Panc1 (cell line): ENCODE measurements at regions of chr16 and their contacts with region 1.

Region 1: GRCh38 chr16:23310217-23310616 is 8.1 kb downstream of the SCNN1B start:
- DNase-seq: no peak
- ATAC-seq: no peak; the same call in 1 of the 2 replicates
- H3K4me3 ChIP-seq: no peak overlapping the region
- H3K27ac ChIP-seq: peak overlapping the region; percentile 52; the same call in 1 of the 2 replicates
- H3K4me1 ChIP-seq: peaks cover 33% of the 10 kb centered on the region
- H3K27me3 ChIP-seq: no peaks in the 10 kb centered on the region
- CTCF ChIP-seq: no peak

Region 2: GRCh38 chr16:23254338-23254737 is 55.9 kb before region 1 on chr16:
- CTCF ChIA-PET with region 1: no interaction called
- POLR2A ChIA-PET with region 1: no interaction called
- in situ Hi-C with region 1: no loop called
- intact Hi-C with region 1: no loop called
- DNase-seq: no peak
- ATAC-seq: peak; percentile 93
- H3K4me3 ChIP-seq: no peak overlapping the region
- H3K27ac ChIP-seq: no peak overlapping the region; the same call in 1 of the 2 replicates
- H3K4me1 ChIP-seq: peaks cover 5% of the 10 kb centered on the region
- H3K27me3 ChIP-seq: no peaks in the 10 kb centered on the region
- CTCF ChIP-seq: no peak

Region 3: DNA sequence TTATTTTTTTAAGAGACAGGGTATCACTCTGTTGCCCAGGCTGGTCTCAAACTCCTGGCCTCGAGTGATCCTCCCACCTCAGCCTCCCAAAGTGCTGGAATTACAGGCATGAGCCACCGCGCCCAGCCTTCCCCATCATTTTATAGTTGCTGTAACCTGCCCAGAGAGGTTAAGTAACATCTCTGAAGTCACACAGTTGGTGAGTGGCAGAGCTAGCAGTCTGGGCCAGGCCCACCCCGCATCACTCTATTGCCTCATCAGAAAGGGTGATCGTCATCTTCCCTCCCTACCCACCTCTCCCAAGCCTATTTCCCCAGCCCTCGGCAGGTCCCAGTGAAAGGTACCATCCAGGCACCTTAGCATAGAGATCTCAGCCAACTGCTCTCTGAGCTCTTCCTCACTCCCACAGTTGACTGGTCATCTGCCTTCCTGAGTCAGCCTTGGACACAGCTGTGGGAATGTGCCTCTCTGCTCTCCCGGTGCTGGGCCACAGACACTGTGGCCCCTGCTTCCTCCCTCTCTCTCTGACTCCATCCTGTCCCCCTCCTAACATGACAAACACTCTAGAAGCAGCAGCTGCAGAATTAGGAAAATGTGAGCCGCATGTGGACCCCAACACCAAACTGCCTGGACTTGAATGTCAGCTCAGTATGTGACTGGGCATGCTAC is 49.0 kb after region 1 on chr16:
- CTCF ChIA-PET with region 1: interaction called, 4 read pairs
- POLR2A ChIA-PET with region 1: interaction called, 11 read pairs
- in situ Hi-C with region 1: no loop called
- intact Hi-C with region 1: no loop called
- DNase-seq: no peak
- ATAC-seq: no peak
- H3K4me3 ChIP-seq: no peak overlapping the region
- H3K27ac ChIP-seq: no peak overlapping the region
- H3K4me1 ChIP-seq: peaks cover 18% of the 10 kb centered on the region
- H3K27me3 ChIP-seq: no peaks in the 10 kb centered on the region
- CTCF ChIP-seq: no peak